Heart left ventricle (tissue), 16 donors: ENCODE measurements at regions of chr3 and their contacts with region 1.

Region 1: GRCh38 chr3:171453178-171453886 is 6.9 kb downstream of the TNIK start:
- DNase-seq: no peak
- ATAC-seq: peak in 1 of 4 donors; percentile 23
- H3K4me3 ChIP-seq: no peak overlapping the region
- H3K27ac ChIP-seq: peak overlapping the region in 3 of 12 donors; percentile 20 to 49 (median 37)
- H3K4me1 ChIP-seq: peaks cover 0 to 53% (median 11%) of the 10 kb centered on the region in 12 donors
- H3K27me3 ChIP-seq: no peaks in the 10 kb centered on the region
- CTCF ChIP-seq: peak in 6 of 12 donors; percentile 15 to 28 (median 19)
- POLR2A ChIP-seq: no peak

Region 2: GRCh38 chr3:170961616-170962400 is 491.5 kb before region 1 on chr3:
- intact Hi-C with region 1: no loop called
- DNase-seq: no peak
- ATAC-seq: no peak
- H3K4me3 ChIP-seq: no peak overlapping the region
- H3K27ac ChIP-seq: peak overlapping the region in 1 of 12 donors; percentile 30
- H3K4me1 ChIP-seq: peaks cover 0 to 11% (median 0%) of the 10 kb centered on the region in 12 donors
- H3K27me3 ChIP-seq: no peaks in the 10 kb centered on the region
- CTCF ChIP-seq: peak; percentile 33 to 74 (median 62)
- POLR2A ChIP-seq: no peak

Region 3: DNA sequence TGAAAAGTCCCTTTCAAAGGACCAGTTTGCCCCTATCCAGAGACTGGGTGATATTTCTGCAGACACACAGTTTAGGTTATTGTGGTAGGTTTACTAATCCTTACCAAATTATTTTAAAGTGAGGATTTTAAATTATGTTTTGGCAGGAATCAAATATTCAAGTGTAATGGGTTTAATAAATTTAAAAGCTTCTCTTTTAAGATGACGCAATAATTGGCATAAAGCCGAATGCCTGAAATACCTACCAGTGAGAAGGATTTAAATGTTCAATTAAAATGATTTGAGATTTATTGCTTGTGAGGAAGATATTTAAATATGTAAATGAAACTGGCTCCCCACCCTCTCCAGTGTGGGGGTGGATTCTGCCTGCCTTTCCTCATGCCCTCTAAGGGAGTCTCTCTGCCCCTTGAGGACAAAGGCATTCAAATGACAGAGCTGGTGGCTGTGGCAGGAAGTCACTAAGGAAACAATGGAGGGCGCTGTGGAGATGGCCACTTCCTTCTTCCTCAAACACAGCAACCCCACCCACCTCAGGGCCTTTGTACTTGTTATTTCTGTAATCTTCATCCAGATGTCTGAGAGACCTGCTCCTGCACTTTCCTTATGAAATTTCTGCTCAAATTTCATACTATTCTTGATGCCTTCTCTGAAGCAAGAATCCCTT is 124.8 kb before region 1 on chr3:
- intact Hi-C with region 1: loop called (anchors 5 to 10 kb)
- DNase-seq: peak in 1 of 5 donors; percentile 38
- ATAC-seq: peak in 3 of 4 donors; percentile 27 to 47 (median 44)
- H3K4me3 ChIP-seq: no peak overlapping the region
- H3K27ac ChIP-seq: peak overlapping the region in 2 of 12 donors; percentile 3 to 36
- H3K4me1 ChIP-seq: peaks cover 0 to 69% (median 38%) of the 10 kb centered on the region in 12 donors
- H3K27me3 ChIP-seq: no peaks in the 10 kb centered on the region
- CTCF ChIP-seq: peak in 1 of 12 donors; percentile 9
- POLR2A ChIP-seq: no peak

Region 4: GRCh38 chr3:171379281-171379680 is 74.1 kb before region 1 on chr3:
- intact Hi-C with region 1: no loop called
- DNase-seq: no peak
- ATAC-seq: no peak
- H3K4me3 ChIP-seq: no peak overlapping the region
- H3K27ac ChIP-seq: no peak overlapping the region
- H3K4me1 ChIP-seq: peaks cover 0 to 78% (median 34%) of the 10 kb centered on the region in 12 donors
- H3K27me3 ChIP-seq: no peaks in the 10 kb centered on the region
- CTCF ChIP-seq: no peak
- POLR2A ChIP-seq: no peak

Region 5: DNA sequence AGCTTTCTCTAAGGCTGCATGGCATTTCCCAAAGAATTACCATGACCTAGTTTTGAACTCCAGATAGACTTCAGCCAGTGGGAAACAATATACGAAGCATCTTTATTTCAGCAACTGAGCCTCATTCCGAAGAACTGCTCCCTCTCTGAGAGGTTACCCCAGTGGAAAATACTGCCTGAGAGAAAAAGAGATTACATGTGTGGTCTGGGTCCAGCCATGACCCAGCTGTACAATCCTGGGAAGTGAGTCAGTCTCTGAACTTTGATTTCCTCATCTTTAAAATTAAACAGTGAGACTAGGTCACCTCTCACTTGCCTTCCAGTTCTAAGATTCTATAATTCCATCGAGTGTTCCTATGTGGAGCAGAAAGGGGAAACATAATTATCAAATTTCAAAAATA is 35.5 kb before region 1 on chr3:
- intact Hi-C with region 1: loop called in 3 of 10 experiments (anchors 5 kb)
- DNase-seq: peak in 2 of 5 donors; percentile 17 to 60
- ATAC-seq: peak; percentile 51 to 87 (median 78)
- H3K4me3 ChIP-seq: no peak overlapping the region
- H3K27ac ChIP-seq: peak overlapping the region in 9 of 12 donors; percentile 25 to 64 (median 39)
- H3K4me1 ChIP-seq: peaks cover 2 to 52% (median 23%) of the 10 kb centered on the region in 12 donors
- H3K27me3 ChIP-seq: no peaks in the 10 kb centered on the region
- CTCF ChIP-seq: no peak
- POLR2A ChIP-seq: no peak